Dorsolateral prefrontal cortex (tissue), 120 donors: ENCODE measurements at regions of chr14 and their contacts with region 1.

Region 1: GRCh38 chr14:22386924-22387775 is 201.9 kb downstream of the DAD1 start:
- DNase-seq: peak in 8 of 10 donors; percentile 62 to 83 (median 67)
- H3K4me3 ChIP-seq: peak overlapping the region in 54 of 59 donors; percentile 1 to 57 (median 31)
- H3K27ac ChIP-seq: peak overlapping the region in 24 of 59 donors; percentile 4 to 93 (median 68)
- H3K27me3 ChIP-seq: no peaks in the 10 kb centered on the region
- CTCF ChIP-seq: peak; percentile 74 to 98 (median 90)

Region 2: DNA sequence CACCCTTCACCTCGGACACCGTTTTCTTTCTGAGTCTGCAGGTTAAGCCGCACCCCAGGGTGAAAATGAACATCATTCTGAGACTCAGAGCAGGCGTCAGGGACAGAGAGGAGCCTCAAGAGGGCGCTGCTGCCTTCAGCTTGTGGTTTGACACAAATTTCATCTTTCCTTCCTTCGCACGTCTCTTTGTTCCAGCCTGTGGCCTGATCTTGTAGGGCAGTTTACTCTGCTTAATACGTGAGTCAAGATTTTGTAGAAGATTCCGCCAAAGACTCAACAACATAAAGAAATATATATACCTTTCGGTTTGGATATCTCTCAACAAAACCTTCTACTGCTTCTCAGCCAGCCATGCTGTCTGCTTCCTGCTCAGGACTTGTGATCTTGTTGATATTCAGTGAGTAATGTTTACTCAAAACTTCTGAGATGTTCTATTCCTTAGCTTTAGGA is 384.3 kb before region 1 on chr14:
- intact Hi-C with region 1: no loop called
- DNase-seq: no peak
- H3K4me3 ChIP-seq: no peak overlapping the region
- H3K27ac ChIP-seq: no peak overlapping the region
- H3K27me3 ChIP-seq: peaks cover 0 to 4% (median 0%) of the 10 kb centered on the region in 45 donors
- CTCF ChIP-seq: peak in 34 of 56 donors; percentile 11 to 54 (median 28)

Region 3: DNA sequence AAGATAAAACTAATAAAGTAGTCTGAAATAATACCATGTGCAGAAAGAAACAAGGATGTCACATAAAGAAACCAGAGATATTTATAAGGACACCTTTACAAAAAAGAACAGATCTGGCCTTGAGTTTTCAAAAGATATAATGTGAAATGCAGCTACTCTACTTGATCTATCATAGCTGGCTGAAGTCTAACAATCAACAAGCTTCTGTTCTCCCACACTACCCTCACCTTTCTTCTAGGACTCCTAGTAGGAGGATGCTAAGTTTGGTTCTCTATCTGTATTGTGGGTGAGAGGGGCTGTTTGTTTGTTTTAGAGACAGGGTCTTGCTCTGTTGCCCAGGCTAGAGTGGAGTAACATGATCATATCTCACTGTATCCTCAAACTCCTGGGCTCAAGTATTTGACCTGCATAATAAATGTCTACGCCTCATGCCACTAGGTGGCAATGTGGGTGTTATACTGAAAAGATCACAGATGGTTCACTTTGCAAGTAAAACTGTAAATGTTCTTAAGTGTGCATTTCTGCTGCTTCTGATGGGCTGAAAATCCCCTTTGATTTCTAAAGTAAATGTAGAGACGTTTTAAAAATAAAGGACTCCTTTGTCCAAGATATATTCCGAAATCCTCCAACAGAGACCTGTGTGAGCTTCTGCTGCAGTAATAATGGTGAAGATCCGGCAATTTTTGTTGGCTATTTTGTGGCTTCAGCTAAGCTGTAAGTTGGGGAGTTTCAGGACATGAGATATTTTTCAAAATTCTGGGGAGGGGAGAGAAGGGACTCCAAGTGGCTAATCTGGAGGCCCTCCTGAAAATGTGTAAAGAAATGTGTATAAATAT is 67.4 kb before region 1 on chr14:
- intact Hi-C with region 1: loop called in 1 of 2 experiments (anchors 5 kb)
- DNase-seq: peak in 7 of 10 donors; percentile 14 to 88 (median 57)
- H3K4me3 ChIP-seq: peak overlapping the region in 1 of 59 donors; percentile 3
- H3K27ac ChIP-seq: peak overlapping the region in 4 of 59 donors; percentile 0 to 31 (median 16)
- H3K27me3 ChIP-seq: peaks cover 0 to 6% (median 0%) of the 10 kb centered on the region in 45 donors
- CTCF ChIP-seq: peak; percentile 52 to 87 (median 78)

Region 4: DNA sequence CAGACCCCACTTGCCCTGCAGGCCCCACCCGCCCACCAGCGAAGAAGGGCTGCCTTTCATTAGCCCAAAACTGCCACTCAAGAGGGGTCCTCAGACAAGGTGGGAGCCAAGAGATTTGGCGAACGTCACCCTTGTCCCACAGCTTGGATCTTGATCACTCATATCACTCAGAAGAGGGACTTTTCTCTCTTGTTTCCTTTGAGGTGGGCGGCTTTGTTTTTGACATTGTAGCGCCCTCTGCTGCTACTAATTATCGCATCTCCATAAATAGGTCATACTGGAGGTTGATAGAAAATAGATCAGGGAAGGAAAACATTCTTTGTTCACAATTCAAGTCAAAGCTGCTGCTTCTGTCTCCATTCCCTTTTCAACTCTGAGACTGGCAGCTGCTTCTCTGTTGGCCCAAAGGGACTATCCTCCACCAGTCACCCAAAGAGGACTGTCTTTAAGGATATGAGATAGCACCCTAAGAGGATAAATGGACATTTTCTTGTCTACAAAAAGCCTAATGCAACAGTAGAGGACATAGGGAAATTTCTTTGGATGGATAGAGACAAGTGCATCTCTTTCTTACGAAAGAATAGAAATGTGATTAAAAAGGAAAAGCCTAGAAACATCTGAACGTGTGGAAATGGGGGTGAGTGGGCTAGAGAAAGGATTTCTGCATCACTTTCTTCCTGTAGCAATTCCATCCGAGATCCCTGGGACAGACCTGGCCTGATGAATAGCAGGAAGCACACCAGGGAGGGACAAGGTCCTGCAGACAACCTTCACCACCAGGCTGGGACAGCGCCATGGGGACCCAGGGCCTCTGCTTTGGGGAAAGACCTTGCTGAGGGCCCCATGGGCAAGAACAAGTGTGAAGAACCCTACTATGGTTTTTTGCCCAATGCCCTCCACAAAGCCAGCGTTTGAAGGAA is 86.0 kb after region 1 on chr14:
- intact Hi-C with region 1: loop called (anchors 1 to 2 kb)
- DNase-seq: peak in 3 of 10 donors; percentile 57 to 69 (median 67)
- H3K4me3 ChIP-seq: no peak overlapping the region
- H3K27ac ChIP-seq: peak overlapping the region in 1 of 59 donors; percentile 38
- H3K27me3 ChIP-seq: peaks cover 0 to 25% (median 0%) of the 10 kb centered on the region in 45 donors
- CTCF ChIP-seq: peak; percentile 16 to 89 (median 70)

Region 5: GRCh38 chr14:22556990-22557623 is 170.0 kb after region 1 on chr14:
- intact Hi-C with region 1: loop called (anchors 5 to 10 kb)
- DNase-seq: peak; percentile 60 to 85 (median 76)
- H3K4me3 ChIP-seq: peak overlapping the region; percentile 13 to 66 (median 46)
- H3K27ac ChIP-seq: peak overlapping the region in 41 of 59 donors; percentile 5 to 82 (median 55)
- H3K27me3 ChIP-seq: no peaks in the 10 kb centered on the region
- CTCF ChIP-seq: peak in 55 of 56 donors; percentile 80 to 100 (median 99)

Region 6: GRCh38 chr14:22766456-22767322 is 379.5 kb after region 1 on chr14 and contains the start of gene OXA1L:
- intact Hi-C with region 1: loop called (anchors 5 to 10 kb)
- DNase-seq: peak; percentile 91 to 96 (median 95)
- H3K4me3 ChIP-seq: peak within 1 kb of the TSS; percentile 61 to 99 (median 89)
- H3K27ac ChIP-seq: peak within 1 kb of the TSS; percentile 71 to 98 (median 93)
- H3K27me3 ChIP-seq: no peaks in the 10 kb centered on the region
- CTCF ChIP-seq: peak in 38 of 56 donors; percentile 5 to 55 (median 28)
- total RNA-seq, gene OXA1L: 33.8 to 82.0 (median 55.8) TPM

Region 7: DNA sequence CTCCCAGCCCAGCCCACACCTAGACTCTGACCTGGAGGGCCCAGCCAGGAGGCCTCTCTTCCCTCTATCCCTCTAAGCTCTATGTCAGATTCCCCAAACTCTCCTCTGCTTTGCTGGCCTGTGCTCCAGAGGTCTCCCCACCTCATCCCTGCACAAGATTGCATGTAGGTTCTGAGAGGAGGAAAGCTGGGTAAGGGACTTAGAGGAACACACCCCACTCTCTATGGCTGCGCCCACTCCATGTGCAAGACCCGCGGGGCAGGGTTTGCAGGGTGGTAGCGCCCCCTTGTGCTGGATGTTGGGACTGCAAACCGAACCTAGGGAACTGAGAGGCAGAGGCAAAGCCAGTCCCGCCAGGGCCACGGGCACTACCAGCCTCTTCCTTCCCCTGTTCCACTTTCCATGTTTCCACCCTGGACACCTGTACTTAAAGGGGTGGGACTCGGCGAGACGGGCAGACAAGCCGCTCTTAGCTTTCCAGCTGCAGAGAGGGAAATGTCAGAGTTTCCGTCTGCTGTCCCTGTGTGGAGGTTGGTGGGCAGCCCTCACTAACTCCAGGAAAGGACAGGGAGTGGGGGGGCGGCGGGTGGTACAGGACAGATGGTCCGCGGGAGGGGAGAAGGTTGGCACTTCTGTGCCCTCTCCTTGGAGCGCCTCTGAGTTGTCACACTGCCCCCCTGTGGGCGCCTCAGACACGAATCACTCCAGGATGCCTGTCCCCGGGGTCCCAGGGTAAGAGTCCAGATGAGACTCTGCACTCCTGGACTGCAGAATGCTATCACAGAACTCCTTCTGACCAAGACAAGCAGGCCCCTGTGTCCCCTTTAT is 466.0 kb after region 1 on chr14:
- intact Hi-C with region 1: loop called in 1 of 2 experiments (anchors 5 kb)
- DNase-seq: peak; percentile 53 to 90 (median 84)
- H3K4me3 ChIP-seq: peak overlapping the region; percentile 29 to 72 (median 51)
- H3K27ac ChIP-seq: peak overlapping the region in 9 of 59 donors; percentile 9 to 79 (median 62)
- H3K27me3 ChIP-seq: no peaks in the 10 kb centered on the region
- CTCF ChIP-seq: peak; percentile 59 to 98 (median 90)